ENCODE measurements at regions of chr7 and their contacts with region 1.

Region 1: DNA sequence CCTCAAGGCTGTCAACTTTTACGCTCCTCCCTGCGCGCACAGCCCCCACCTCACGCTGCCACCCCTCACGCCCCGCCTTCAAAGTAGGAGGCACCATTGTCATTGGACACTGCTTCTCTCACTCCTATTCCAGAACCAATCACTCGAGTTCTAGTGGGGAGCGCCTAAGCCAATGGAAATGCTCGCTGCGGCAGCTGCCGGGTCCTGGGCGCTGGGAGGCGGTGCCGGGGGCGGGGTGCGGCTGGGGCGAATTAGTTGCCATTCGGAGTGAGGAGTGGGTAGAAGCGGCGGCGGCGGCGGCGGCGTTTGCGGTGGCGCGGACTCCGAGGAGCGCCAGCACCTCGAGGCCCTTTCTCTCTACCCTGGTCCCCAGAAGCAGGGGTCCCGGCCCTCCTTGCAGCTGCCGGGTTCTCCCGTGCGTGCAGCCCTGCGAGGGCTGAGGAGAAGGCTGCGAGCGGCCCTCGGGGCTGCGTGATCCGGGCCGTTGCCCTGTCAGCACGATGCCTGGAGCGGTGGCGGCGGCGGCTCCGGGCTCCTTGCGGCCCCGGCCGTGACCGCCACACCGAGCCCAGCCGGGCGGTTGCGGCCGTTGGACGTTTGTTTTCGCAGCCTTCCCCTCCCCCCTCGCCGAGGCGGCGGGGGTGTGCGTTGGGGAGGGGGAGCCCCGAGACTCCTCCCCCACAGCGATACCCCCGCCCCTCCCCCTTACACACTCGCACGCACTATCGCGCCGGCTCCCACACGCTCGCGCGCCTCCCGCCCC is at the start of gene GLCCI1:
- DNase-seq: peak; percentile 98
- H3K4me3 Mint-ChIP-seq: peak within 1 kb of the TSS; percentile 90
- H3K27ac Mint-ChIP-seq: peak within 1 kb of the TSS; percentile 92
- H3K4me1 Mint-ChIP-seq: peaks cover 29% of the 10 kb centered on the region
- H3K27me3 Mint-ChIP-seq: no peaks in the 10 kb centered on the region
- total RNA-seq, gene GLCCI1: 12.9 to 13.3 TPM

Region 2: GRCh38 chr7:7566651-7567611 is 401.8 kb before region 1 on chr7 and contains the start of gene MIOS:
- CTCF ChIA-PET with region 1: no interaction called
- intact Hi-C with region 1: loop called (anchors 2 kb)
- DNase-seq: peak; percentile 76
- H3K4me3 Mint-ChIP-seq: peak within 1 kb of the TSS; percentile 80
- H3K27ac Mint-ChIP-seq: peak within 1 kb of the TSS; percentile 63
- H3K4me1 Mint-ChIP-seq: peaks cover 30% of the 10 kb centered on the region
- H3K27me3 Mint-ChIP-seq: no peaks in the 10 kb centered on the region
- total RNA-seq, gene MIOS: 40.6 to 43.0 TPM

Region 3: GRCh38 chr7:7761340-7761980 is 207.3 kb before region 1 on chr7:
- CTCF ChIA-PET with region 1: interaction called, 5 read pairs
- intact Hi-C with region 1: loop called (anchors 1 kb)
- DNase-seq: no peak
- H3K4me3 Mint-ChIP-seq: peak overlapping the region; percentile 83
- H3K27ac Mint-ChIP-seq: peak overlapping the region; percentile 76
- H3K4me1 Mint-ChIP-seq: peaks cover 34% of the 10 kb centered on the region
- H3K27me3 Mint-ChIP-seq: no peaks in the 10 kb centered on the region

Region 4: DNA sequence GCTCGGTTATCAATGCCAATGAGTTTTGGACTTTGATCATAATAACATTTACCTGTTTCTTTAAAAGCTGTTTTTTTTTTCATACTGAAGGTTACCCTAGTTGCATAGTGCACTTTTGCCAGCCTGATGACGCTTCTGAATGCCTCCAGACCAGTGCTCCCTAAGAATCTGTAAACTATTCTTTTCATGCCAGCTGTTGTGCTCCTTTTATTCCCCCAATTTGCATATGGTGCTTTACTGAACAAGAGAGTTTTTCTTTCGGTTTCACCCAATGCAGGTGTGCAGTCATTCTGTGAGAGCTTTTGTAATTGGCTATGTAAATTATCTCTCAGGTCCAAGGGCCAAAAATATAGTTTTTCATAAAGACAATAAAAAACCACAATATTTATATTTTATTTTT is 48.2 kb before region 1 on chr7:
- CTCF ChIA-PET with region 1: no interaction called
- intact Hi-C with region 1: loop called (anchors 1 kb)
- DNase-seq: peak; percentile 46
- H3K4me3 Mint-ChIP-seq: no peak overlapping the region
- H3K27ac Mint-ChIP-seq: no peak overlapping the region
- H3K4me1 Mint-ChIP-seq: peaks cover 24% of the 10 kb centered on the region
- H3K27me3 Mint-ChIP-seq: no peaks in the 10 kb centered on the region

Region 5: DNA sequence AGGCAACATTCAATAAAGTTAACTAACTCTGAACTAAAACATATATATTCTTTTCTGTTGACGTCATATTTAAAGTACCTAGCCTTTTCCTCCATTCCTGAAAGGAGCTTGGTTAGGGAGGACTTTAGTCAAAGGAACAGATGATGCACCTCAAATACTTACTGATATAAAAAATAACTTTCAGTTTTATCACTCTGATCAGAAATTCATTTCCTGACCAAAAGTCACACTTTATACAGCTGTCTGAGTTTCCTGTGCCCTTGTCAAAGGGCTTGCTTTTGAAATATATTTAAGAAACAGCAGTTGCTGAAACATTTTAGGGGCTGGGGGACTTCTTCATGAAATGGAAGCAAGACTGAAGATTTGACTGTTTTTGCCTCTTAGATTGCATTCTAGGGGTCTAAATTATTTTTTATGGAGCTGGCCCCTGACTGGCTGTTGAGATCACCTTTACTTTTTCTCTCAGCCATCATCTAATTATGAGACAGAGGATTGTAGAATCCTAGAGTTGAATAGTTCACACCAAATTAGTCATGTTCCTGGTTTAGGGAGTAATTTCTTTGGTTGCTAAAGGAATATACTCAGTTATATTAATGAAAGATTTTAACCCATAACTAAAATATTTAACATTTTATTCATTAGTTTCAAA is 46.5 kb after region 1 on chr7:
- CTCF ChIA-PET with region 1: no interaction called
- intact Hi-C with region 1: loop called (anchors 1 kb)
- DNase-seq: no peak
- H3K4me3 Mint-ChIP-seq: peak overlapping the region; percentile 4
- H3K27ac Mint-ChIP-seq: peak overlapping the region; percentile 68
- H3K4me1 Mint-ChIP-seq: peaks cover 47% of the 10 kb centered on the region
- H3K27me3 Mint-ChIP-seq: no peaks in the 10 kb centered on the region

Region 6: GRCh38 chr7:8134089-8134733 is 165.5 kb after region 1 on chr7:
- CTCF ChIA-PET with region 1: interaction called, 3 read pairs
- intact Hi-C with region 1: loop called (anchors 1 kb)
- DNase-seq: peak; percentile 71
- H3K4me3 Mint-ChIP-seq: peak overlapping the region; percentile 33
- H3K27ac Mint-ChIP-seq: peak overlapping the region; percentile 68
- H3K4me1 Mint-ChIP-seq: peaks cover 52% of the 10 kb centered on the region
- H3K27me3 Mint-ChIP-seq: no peaks in the 10 kb centered on the region

Measured in activated naive CD4-positive, alpha-beta T cell treated with anti-CD3 and anti-CD28 coated beads for 36 hours (primary cell).